ENCODE measurements at regions of chr17 and their contacts with region 1.

Region 1: DNA sequence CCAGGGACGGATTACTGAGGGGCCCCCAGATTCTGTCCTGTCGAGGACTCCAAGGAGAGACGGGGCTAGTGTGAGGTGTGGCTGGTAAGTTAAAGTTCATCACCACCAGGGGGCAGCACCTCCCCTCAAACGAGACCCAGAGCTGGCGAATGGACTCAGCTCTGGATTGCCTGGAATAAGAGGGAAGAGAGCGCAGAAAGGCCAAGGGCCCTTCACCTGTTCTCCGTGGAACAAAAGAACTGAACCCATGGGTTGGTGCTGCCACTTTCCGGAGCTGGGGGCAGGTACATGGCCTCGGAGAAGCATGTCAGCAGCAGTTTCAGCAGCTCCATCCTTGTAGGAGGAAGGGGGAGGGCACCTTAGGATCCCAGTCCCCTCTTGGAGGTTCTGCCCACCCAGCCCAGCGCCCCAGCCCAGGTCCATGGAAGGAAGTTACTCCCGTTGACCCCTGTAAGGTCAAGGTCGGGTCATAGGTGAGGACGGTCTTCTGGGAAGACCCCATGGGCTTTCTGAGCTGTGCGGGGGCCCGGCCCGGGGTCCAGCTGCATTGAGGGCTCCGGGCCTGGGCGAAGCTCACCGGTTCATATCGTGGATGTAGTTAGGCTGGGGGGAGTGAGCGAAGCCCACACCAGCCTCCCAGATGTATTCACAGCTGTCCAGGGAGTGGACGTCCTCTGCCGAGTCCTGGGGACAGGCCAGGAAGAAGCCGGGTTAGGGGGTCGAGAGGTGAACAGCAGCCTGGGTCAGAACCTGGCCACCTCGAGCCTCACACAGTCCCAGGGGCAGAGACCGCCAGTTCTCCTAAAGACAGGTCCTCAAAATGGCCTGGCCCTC is 10.7 kb downstream of the HID1 start:
- DNase-seq: peak; percentile 71
- H3K4me3 ChIP-seq: no peak overlapping the region
- H3K27ac ChIP-seq: no peak overlapping the region
- H3K4me1 ChIP-seq: peaks cover 18% of the 10 kb centered on the region
- H3K27me3 ChIP-seq: no peaks in the 10 kb centered on the region
- CTCF ChIP-seq: peak; percentile 63 to 74

Region 2: GRCh38 chr17:74873038-74873873 is 88.6 kb before region 1 on chr17:
- CTCF ChIA-PET with region 1: no interaction called
- dilution Hi-C with region 1: loop called (anchors 5 kb)
- in situ Hi-C with region 1: no loop called
- intact Hi-C with region 1: loop called (anchors 2 kb)
- DNase-seq: peak; percentile 100
- H3K4me3 ChIP-seq: peak overlapping the region; percentile 85 to 97 (median 90)
- H3K27ac ChIP-seq: peak overlapping the region; percentile 96
- H3K4me1 ChIP-seq: peaks cover 21% of the 10 kb centered on the region
- H3K27me3 ChIP-seq: no peaks in the 10 kb centered on the region
- CTCF ChIP-seq: no peak

Region 3: DNA sequence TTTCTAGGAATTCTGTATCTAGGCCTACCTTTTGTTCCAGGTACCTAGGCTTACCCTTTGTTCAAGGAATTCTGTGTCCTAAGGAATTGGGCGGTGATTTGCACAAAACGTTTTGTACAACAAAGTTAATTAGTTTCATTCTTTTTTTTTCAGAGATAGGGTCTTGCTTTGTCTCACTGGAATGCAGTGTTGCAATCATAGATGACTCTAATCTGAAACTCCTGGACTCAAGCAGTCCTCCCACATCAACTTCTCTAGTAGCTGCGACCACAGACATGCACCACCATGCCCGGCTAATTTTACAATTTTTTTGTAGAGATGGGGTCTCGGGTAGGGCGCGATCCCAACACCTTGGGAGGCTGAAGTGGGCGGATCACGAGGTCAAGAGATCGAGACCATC is 32.6 kb after region 1 on chr17:
- CTCF ChIA-PET with region 1: interaction called, 11 read pairs
- dilution Hi-C with region 1: no loop called
- in situ Hi-C with region 1: no loop called
- intact Hi-C with region 1: no loop called
- DNase-seq: peak; percentile 77
- H3K4me3 ChIP-seq: no peak overlapping the region
- H3K27ac ChIP-seq: peak overlapping the region; percentile 91
- H3K4me1 ChIP-seq: peaks cover 58% of the 10 kb centered on the region
- H3K27me3 ChIP-seq: no peaks in the 10 kb centered on the region
- CTCF ChIP-seq: no peak

Region 4: GRCh38 chr17:75034236-75034908 is 72.5 kb after region 1 on chr17:
- CTCF ChIA-PET with region 1: no interaction called
- dilution Hi-C with region 1: no loop called
- in situ Hi-C with region 1: no loop called
- intact Hi-C with region 1: loop called (anchors 1 kb)
- DNase-seq: peak; percentile 91
- H3K4me3 ChIP-seq: peak overlapping the region; percentile 57 to 85 (median 65)
- H3K27ac ChIP-seq: peak overlapping the region; percentile 86
- H3K4me1 ChIP-seq: peaks cover 15% of the 10 kb centered on the region
- H3K27me3 ChIP-seq: no peaks in the 10 kb centered on the region
- CTCF ChIP-seq: peak in 1 of 2 donors; percentile 36

Region 5: DNA sequence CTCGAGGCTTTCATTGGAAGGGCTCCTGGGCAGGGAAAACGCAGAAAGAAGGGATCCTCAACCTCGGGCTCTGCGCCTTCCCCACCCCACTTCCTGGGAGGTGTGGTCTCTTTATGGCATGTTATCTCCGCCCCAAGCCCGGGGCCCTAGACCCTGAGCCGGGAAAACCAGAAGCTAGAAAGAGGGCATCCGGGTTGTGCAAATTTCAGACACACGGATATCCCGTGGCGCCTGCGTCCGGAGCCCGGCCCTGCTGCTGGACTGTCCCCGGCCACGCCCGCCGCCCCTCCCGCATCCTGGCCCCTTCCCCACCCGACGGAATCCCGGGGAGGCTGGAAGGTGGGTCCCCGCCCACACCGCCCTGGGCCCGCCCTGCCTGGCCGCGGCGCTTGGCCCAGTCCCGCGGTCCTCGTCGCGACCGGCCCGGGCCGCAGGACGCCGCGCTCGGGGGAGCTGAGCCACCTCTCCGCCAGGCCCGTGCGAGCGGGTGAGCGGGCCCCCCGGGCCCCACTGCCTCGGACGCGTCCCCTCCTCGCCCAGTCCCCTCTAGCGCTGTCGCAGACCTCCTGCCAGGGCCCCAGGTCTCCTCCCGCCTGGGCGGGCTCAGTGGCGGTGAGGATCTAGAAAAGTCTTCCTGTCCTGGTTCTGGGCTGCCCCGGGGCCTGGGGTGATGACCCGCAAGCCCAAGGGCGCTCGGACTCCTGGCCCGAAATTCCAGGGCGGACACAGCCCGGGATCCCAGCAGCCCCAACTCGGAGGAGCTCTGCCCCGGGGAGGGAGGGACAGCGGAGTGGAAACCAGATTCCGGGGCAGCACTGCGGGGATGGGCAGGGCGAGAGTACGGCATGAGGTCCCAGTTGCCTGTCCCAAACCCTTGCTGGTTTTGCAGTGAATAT is 125.9 kb after region 1 on chr17 and contains the start of gene SLC16A5:
- CTCF ChIA-PET with region 1: no interaction called
- dilution Hi-C with region 1: no loop called
- in situ Hi-C with region 1: no loop called
- intact Hi-C with region 1: no loop called
- DNase-seq: peak; percentile 50
- H3K4me3 ChIP-seq: peak within 1 kb of the TSS in 2 of 3 experiments; percentile 5 to 42
- H3K27ac ChIP-seq: no peak within 1 kb of the TSS
- H3K4me1 ChIP-seq: peaks cover 22% of the 10 kb centered on the region
- H3K27me3 ChIP-seq: no peaks in the 10 kb centered on the region
- CTCF ChIP-seq: no peak
- total RNA-seq, gene SLC16A5: 3.5 to 7.1 TPM

Region 6: DNA sequence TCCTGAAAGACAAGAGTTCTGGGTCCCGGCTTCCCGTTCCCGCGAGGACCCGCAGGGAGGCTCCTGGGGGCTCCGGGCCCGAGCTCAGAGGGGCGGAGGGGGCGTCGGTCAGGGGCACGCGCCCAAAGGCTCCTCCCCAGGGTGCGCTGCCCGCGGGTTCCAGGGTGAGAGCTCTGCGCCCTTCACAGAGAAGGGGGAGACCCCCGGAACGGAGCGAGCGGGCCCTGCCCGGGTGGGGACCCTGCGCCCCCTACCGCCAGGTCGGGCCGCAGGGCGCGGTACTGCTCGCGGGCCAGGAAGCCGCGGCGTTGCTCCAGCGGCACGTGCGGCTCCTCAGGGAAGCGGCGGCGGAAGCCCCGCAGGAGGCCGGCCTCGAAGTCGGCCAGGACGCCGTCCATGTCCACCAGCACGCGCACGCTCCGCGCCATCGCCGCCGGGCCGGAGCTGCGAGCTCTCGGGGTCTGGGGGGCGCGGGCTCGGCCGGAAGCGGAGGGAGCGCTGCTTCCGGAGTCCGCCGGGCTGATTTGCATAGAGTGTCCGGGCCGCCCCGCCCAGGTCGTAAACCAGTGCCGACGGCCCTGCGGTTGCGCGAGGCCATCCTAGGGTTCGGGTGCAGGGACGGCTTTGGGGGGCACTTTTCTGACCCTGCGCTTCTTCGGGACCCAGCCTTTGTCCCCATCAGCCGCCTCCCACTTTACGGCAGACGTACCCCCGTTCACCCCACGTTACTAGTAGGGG is 169.6 kb after region 1 on chr17 and contains the start of gene NT5C:
- CTCF ChIA-PET with region 1: no interaction called
- dilution Hi-C with region 1: no loop called
- in situ Hi-C with region 1: no loop called
- intact Hi-C with region 1: loop called (anchors 5 kb)
- DNase-seq: peak; percentile 69
- H3K4me3 ChIP-seq: peak within 1 kb of the TSS; percentile 72 to 97 (median 87)
- H3K27ac ChIP-seq: peak within 1 kb of the TSS; percentile 67
- H3K4me1 ChIP-seq: peaks cover 25% of the 10 kb centered on the region
- H3K27me3 ChIP-seq: no peaks in the 10 kb centered on the region
- CTCF ChIP-seq: peak; percentile 26 to 69
- total RNA-seq, gene NT5C: 45.7 to 65.7 TPM

Region 7: DNA sequence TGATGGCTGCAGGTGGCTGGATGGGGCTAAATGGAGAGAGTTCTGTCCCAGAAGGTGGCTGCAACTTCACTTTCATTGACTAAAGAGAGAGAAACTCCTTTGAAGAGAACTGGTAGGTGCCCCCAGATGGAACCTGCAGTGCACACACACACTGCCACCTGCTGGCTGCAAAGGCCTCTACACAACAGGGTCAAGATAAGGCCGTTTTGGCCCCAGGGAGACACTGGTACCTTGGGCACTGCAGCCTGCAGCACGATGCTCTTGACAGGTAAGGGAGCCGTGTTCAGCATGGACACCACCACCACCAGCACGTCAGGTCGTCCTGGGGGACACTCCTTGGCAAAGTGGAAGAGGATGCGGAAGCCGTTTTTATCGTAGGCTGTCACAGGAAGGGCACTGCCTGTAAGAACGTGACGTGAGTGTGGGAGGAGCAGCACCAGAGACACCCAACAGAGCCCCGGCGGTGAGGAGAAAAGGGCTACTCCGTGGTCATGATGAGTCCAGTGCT is 276.9 kb after region 1 on chr17:
- CTCF ChIA-PET with region 1: no interaction called
- dilution Hi-C with region 1: no loop called
- in situ Hi-C with region 1: no loop called
- intact Hi-C with region 1: loop called (anchors 1 kb)
- DNase-seq: peak; percentile 46
- H3K4me3 ChIP-seq: no peak overlapping the region
- H3K27ac ChIP-seq: no peak overlapping the region
- H3K4me1 ChIP-seq: no peaks in the 10 kb centered on the region
- H3K27me3 ChIP-seq: no peaks in the 10 kb centered on the region
- CTCF ChIP-seq: peak; percentile 79 to 86

Measured in mammary epithelial cell (primary cell).